Mammary epithelial cell (primary cell): ENCODE measurements at regions of chr22 and their contacts with region 1.

Region 1: GRCh38 chr22:19218541-19219233 is 40.2 kb upstream of the SLC25A1 start:
- DNase-seq: no peak
- H3K4me3 ChIP-seq: no peak overlapping the region
- H3K27ac ChIP-seq: no peak overlapping the region
- H3K4me1 ChIP-seq: no peaks in the 10 kb centered on the region
- H3K27me3 ChIP-seq: no peaks in the 10 kb centered on the region
- CTCF ChIP-seq: no peak

Region 2: GRCh38 chr22:19130959-19131684 is 87.6 kb before region 1 on chr22 and contains the start of gene TSSK2:
- CTCF ChIA-PET with region 1: no interaction called
- dilution Hi-C with region 1: loop called (anchors 5 kb)
- in situ Hi-C with region 1: no loop called
- intact Hi-C with region 1: no loop called
- DNase-seq: no peak
- H3K4me3 ChIP-seq: no peak within 1 kb of the TSS
- H3K27ac ChIP-seq: no peak within 1 kb of the TSS
- H3K4me1 ChIP-seq: peaks cover 15% of the 10 kb centered on the region
- H3K27me3 ChIP-seq: no peaks in the 10 kb centered on the region
- CTCF ChIP-seq: no peak
- total RNA-seq, gene TSSK2: 0.16 TPM in 1 of 2 donors, not detected in the other

Region 3: GRCh38 chr22:19253143-19253542 is 34.5 kb after region 1 on chr22:
- CTCF ChIA-PET with region 1: no interaction called
- dilution Hi-C with region 1: loop called (anchors 5 kb)
- in situ Hi-C with region 1: no loop called
- intact Hi-C with region 1: no loop called
- DNase-seq: no peak
- H3K4me3 ChIP-seq: no peak overlapping the region
- H3K27ac ChIP-seq: no peak overlapping the region
- H3K4me1 ChIP-seq: no peaks in the 10 kb centered on the region
- H3K27me3 ChIP-seq: no peaks in the 10 kb centered on the region
- CTCF ChIP-seq: no peak